ENCODE measurements at regions of chr2 and their contacts with region 1.

Region 1: GRCh38 chr2:42086500-42086953 is 38.7 kb downstream of the PKDCC start:
- DNase-seq: peak; percentile 69
- H3K4me3 ChIP-seq: no peak overlapping the region
- H3K27ac ChIP-seq: no peak overlapping the region
- H3K4me1 ChIP-seq: no peaks in the 10 kb centered on the region
- H3K27me3 ChIP-seq: peaks cover 3 to 4% of the 10 kb centered on the region in 2 experiments
- CTCF ChIP-seq: peak; percentile 62
- POLR2A ChIP-seq: no peak

Region 2: DNA sequence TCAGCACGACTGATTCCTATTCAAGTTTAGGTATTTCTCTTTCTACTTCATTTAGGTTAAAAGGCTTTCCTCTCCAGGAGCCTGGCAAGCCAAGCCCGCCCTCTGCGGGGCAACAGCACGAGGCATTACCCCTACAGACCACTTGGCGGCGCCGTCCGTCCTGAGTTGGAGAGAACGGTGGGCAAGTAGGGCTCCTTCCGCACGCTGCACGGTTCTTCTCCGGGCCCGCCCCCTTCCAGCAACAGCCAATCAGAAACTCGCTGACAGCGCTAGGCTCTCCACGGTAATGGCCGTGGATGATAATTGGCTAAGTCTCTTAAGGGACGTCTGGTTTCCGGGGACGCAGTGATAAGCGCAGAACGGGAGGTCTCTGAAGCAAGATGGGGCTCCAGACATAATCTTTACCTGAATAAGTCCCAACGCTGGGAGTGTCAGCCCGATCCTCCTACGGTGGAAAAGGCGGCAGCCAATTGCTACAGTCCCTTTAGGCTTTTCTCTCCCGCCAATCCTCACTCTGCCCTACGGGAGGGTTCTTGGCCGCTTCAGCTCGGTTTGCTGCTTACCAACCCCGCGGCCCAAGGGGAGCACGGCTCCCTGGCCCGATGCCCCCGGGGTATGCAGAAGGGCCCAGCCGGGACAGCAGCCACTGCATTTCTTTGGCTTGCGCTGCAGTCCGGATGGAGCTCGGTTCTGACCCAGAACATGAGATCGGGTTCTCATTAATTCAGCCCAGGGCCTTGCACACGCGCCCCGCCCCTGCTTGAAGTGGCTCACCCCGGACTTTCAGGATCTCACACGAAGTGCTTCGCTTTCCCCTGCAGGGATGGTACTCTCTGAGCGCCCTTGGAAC is 245.6 kb before region 1 on chr2:
- CTCF ChIA-PET with region 1: interaction called, 9 read pairs
- POLR2A ChIA-PET with region 1: no interaction called
- dilution Hi-C with region 1: no loop called
- intact Hi-C with region 1: loop called (anchors 1 kb)
- DNase-seq: peak; percentile 94
- H3K4me3 ChIP-seq: peak overlapping the region; percentile 27 to 69 (median 60)
- H3K27ac ChIP-seq: no peak overlapping the region
- H3K4me1 ChIP-seq: peaks cover 7% of the 10 kb centered on the region
- H3K27me3 ChIP-seq: peaks cover 15 to 18% of the 10 kb centered on the region in 2 experiments
- CTCF ChIP-seq: peak; percentile 92 to 96
- POLR2A ChIP-seq: peak; percentile 28

Region 3: GRCh38 chr2:41853427-41854216 is 232.9 kb before region 1 on chr2:
- CTCF ChIA-PET with region 1: interaction called, 372 read pairs
- POLR2A ChIA-PET with region 1: no interaction called
- dilution Hi-C with region 1: loop called (anchors 25 kb)
- intact Hi-C with region 1: loop called (anchors 1 kb)
- DNase-seq: peak; percentile 53
- H3K4me3 ChIP-seq: no peak overlapping the region
- H3K27ac ChIP-seq: no peak overlapping the region
- H3K4me1 ChIP-seq: no peaks in the 10 kb centered on the region
- H3K27me3 ChIP-seq: peaks cover 4% of the 10 kb centered on the region in 2 experiments
- CTCF ChIP-seq: peak; percentile 53 to 66
- POLR2A ChIP-seq: no peak

Region 4: DNA sequence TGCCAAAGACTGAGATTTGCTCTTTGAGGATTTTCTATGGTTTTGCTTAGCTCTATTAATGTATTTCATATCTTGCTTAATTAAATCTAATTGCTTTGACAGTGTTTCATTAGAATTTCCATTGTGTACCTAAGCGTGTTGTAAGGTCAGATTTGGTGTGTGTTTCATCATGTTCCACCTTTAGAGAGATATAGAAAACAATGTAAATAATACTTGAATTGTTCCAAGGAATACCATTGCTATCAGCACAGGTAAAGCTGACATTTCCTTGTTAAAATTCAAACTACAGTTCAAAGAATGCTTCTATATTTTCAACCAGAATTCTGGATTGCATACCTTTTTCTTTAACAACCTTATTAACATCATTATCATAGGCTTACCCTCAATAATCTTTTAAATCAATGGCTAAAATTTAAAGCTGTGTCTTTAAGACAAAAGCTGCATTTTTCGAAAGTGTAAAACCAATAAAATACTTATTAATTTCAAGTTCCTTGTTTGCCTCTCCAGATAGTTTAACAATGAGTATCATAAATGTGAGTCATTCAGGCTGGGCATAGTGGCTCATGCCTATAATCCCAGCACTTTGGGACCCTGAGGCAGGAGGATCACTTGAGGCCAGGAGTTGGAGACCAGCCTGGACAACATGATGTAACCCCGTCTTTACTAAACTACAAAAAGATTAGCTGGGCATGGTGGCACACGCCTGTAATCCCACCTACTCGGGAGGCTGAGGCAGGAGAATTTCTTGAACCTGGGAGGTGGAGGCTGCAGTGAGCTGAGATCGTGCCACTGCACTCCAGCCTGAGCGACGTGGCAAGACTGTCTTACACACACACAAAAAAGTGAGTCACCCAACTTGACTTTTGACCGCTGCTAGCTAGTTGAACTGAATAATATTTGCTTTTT is 226.7 kb before region 1 on chr2:
- CTCF ChIA-PET with region 1: interaction called, 372 read pairs
- POLR2A ChIA-PET with region 1: no interaction called
- dilution Hi-C with region 1: loop called (anchors 25 kb)
- intact Hi-C with region 1: no loop called
- DNase-seq: no peak
- H3K4me3 ChIP-seq: no peak overlapping the region
- H3K27ac ChIP-seq: no peak overlapping the region
- H3K4me1 ChIP-seq: peaks cover 2% of the 10 kb centered on the region
- H3K27me3 ChIP-seq: peaks cover 0 to 3% of the 10 kb centered on the region in 2 experiments
- CTCF ChIP-seq: no peak
- POLR2A ChIP-seq: no peak

Region 5: DNA sequence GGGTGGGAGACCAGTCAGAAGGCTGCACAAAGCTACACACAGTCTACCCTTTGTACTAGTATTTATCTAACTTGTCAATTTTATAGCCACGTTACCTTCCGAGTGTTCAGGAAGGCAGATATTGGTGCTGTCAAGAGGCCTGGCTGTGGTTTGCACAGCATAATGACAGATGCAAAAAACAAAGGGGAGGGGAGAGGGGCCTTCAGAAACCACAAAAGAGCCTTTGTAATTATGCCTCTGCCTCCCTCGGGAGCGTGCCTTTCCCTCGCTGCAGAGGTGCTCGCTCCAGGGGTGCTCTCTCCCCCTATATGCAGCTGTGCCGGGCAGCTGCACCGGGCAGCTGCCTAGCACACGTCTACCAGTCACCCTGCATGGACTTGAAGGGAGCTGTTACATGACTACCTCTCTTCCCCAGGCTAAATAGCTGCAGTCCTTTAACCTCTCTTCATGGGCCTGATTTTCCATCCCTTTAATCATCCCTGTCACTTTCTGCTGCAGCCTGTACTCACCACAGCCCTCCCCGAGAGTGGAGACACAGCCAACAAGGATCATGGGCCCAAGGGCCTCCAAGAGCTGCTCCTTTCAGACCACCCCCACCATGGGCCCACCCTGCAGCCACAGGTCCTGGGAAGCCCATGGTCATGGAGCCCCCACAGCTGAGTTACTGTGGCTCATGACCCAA is 207.2 kb before region 1 on chr2:
- CTCF ChIA-PET with region 1: interaction called, 625 read pairs
- POLR2A ChIA-PET with region 1: no interaction called
- dilution Hi-C with region 1: loop called (anchors 25 kb)
- intact Hi-C with region 1: no loop called
- DNase-seq: no peak
- H3K4me3 ChIP-seq: no peak overlapping the region
- H3K27ac ChIP-seq: no peak overlapping the region
- H3K4me1 ChIP-seq: no peaks in the 10 kb centered on the region
- H3K27me3 ChIP-seq: peaks cover 0 to 1% of the 10 kb centered on the region in 2 experiments
- CTCF ChIP-seq: no peak
- POLR2A ChIP-seq: no peak

Region 6: DNA sequence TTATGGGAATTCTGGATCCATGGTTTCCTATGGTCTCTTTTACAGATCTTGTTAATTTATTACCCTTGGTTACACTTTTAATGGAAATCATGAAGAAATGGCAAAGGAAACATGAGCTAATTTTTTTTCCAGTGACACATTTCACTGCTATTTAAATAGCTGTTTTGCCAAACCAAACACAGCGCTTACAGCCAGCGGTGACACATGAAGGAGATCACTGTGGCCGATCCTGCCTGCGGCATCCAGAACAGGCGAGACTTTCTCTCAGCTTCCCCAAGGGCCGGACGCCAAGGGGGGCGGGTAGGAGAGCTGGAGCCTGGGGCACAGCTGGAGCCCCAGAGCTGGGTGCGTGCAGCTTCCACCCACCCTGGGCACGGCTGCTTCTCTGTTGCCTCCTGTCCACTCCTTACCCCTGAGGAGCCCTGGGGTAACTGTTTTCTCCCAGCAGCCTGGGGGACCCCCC is 120.1 kb before region 1 on chr2:
- CTCF ChIA-PET with region 1: no interaction called
- POLR2A ChIA-PET with region 1: no interaction called
- dilution Hi-C with region 1: no loop called
- intact Hi-C with region 1: loop called (anchors 5 kb)
- DNase-seq: peak; percentile 93
- H3K4me3 ChIP-seq: no peak overlapping the region
- H3K27ac ChIP-seq: peak overlapping the region; percentile 60
- H3K4me1 ChIP-seq: peaks cover 24% of the 10 kb centered on the region
- H3K27me3 ChIP-seq: no peaks in the 10 kb centered on the region
- CTCF ChIP-seq: no peak
- POLR2A ChIP-seq: no peak

Region 7: GRCh38 chr2:42047488-42048298 is 38.8 kb before region 1 on chr2 and contains the start of gene PKDCC:
- CTCF ChIA-PET with region 1: interaction called, 5 read pairs
- POLR2A ChIA-PET with region 1: interaction called, 5 read pairs
- dilution Hi-C with region 1: no loop called
- intact Hi-C with region 1: loop called (anchors 2 kb)
- DNase-seq: peak; percentile 62
- H3K4me3 ChIP-seq: peak within 1 kb of the TSS; percentile 42 to 58 (median 51)
- H3K27ac ChIP-seq: no peak within 1 kb of the TSS
- H3K4me1 ChIP-seq: peaks cover 9% of the 10 kb centered on the region
- H3K27me3 ChIP-seq: peaks cover 14 to 21% of the 10 kb centered on the region in 2 experiments
- CTCF ChIP-seq: no peak
- POLR2A ChIP-seq: no peak
- total RNA-seq, gene PKDCC: 5.9 and 6.9 TPM in 2 replicates

Measured in endothelial cell of umbilical vein (primary cell).